ENCODE measurements at regions of chr15 and their contacts with region 1.

Region 1: GRCh38 chr15:44682211-44682610 is 18.7 kb upstream of the SPG11 start:
- DNase-seq: no peak
- ATAC-seq: no peak
- H3K4me3 ChIP-seq: no peak overlapping the region
- H3K4me3 Mint-ChIP-seq: peak overlapping the region; percentile 77
- H3K27ac ChIP-seq: peak overlapping the region; percentile 38 to 68
- H3K27ac Mint-ChIP-seq: peak overlapping the region; percentile 89
- H3K4me1 ChIP-seq: peaks cover 68% of the 10 kb centered on the region
- H3K4me1 Mint-ChIP-seq: peaks cover 93% of the 10 kb centered on the region
- H3K27me3 ChIP-seq: no peaks in the 10 kb centered on the region
- H3K27me3 Mint-ChIP-seq: no peaks in the 10 kb centered on the region
- CTCF ChIP-seq: no peak

Region 2: GRCh38 chr15:42903388-42904324 is 1778.6 kb before region 1 on chr15:
- CTCF ChIA-PET with region 1: no interaction called
- POLR2A ChIA-PET with region 1: no interaction called
- intact Hi-C with region 1: loop called in 1 of 2 experiments (anchors 5 kb)
- DNase-seq: no peak
- ATAC-seq: no peak
- H3K4me3 ChIP-seq: no peak overlapping the region
- H3K4me3 Mint-ChIP-seq: no peak overlapping the region
- H3K27ac ChIP-seq: no peak overlapping the region
- H3K27ac Mint-ChIP-seq: no peak overlapping the region
- H3K4me1 ChIP-seq: no peaks in the 10 kb centered on the region
- H3K4me1 Mint-ChIP-seq: peaks cover 18% of the 10 kb centered on the region
- H3K27me3 ChIP-seq: no peaks in the 10 kb centered on the region
- H3K27me3 Mint-ChIP-seq: no peaks in the 10 kb centered on the region
- CTCF ChIP-seq: no peak

Region 3: GRCh38 chr15:44692659-44693058 is 10.4 kb after region 1 on chr15:
- CTCF ChIA-PET with region 1: no interaction called
- POLR2A ChIA-PET with region 1: interaction called, 30 read pairs
- intact Hi-C with region 1: no loop called
- DNase-seq: no peak
- ATAC-seq: no peak
- H3K4me3 ChIP-seq: no peak overlapping the region
- H3K4me3 Mint-ChIP-seq: no peak overlapping the region
- H3K27ac ChIP-seq: no peak overlapping the region
- H3K27ac Mint-ChIP-seq: no peak overlapping the region
- H3K4me1 ChIP-seq: peaks cover 22% of the 10 kb centered on the region
- H3K4me1 Mint-ChIP-seq: peaks cover 53% of the 10 kb centered on the region
- H3K27me3 ChIP-seq: no peaks in the 10 kb centered on the region
- H3K27me3 Mint-ChIP-seq: no peaks in the 10 kb centered on the region
- CTCF ChIP-seq: no peak

Measured in CD4-positive, alpha-beta T cell (primary cell).